Left colon (tissue), 2 donors: ENCODE measurements at regions of chr6 and their contacts with region 1.

Region 1: DNA sequence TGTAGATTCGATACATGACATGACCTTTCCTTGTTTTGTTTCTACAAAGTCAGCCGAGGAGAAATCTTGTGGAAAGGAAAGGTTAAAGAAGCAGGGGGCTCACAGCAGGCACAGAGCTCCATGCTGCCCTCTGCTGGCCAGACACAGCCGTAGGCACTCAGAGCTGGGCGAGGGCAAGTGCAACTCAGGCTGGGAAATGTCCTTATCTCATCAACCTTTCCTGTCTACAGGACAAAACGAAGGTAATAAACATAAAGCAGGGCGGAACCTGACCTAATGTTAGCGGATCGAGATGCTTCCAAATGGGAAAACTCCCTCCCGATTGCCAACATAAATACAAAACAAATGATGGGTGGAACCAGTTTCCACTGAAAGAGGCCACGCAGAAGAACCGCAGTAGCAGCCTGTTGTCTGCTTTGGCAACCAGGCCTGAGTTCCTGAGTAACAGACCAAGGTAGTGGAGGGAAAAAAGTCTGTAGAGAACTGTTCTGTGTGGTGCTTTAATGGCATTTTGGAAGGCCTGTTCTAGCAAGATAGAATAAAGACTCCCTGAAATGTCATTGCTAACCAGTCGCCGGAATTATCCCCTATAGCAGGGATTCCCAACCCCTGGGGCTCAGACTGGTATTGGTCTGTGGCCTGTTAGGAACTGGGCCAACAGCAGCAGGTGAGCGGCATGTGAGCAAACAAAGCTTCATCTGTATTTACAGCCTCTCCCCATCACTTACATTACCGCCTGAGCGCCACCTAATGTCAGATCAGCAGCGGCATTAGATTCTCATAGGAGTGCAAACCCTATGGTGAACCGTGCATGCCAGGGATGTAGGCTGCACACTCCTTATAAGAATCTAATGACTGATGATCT is 85.2 kb downstream of the MBOAT1 start:
- DNase-seq: peak; percentile 81 to 84
- ATAC-seq: peak; percentile 96

Region 2: GRCh38 chr6:19911223-19911622 is 215.8 kb before region 1 on chr6:
- intact Hi-C with region 1: no loop called
- DNase-seq: no peak
- ATAC-seq: no peak

Region 3: GRCh38 chr6:20212392-20213217 is 85.6 kb after region 1 on chr6 and contains the start of gene MBOAT1:
- intact Hi-C with region 1: loop called in 1 of 2 experiments (anchors 10 kb)
- DNase-seq: peak; percentile 88 to 91
- ATAC-seq: peak; percentile 92
- total RNA-seq, gene MBOAT1: 54.7 to 72.6 TPM